CD4-positive, alpha-beta memory T cell (primary cell): ENCODE measurements at regions of chrX and their contacts with region 1.

Region 1: DNA sequence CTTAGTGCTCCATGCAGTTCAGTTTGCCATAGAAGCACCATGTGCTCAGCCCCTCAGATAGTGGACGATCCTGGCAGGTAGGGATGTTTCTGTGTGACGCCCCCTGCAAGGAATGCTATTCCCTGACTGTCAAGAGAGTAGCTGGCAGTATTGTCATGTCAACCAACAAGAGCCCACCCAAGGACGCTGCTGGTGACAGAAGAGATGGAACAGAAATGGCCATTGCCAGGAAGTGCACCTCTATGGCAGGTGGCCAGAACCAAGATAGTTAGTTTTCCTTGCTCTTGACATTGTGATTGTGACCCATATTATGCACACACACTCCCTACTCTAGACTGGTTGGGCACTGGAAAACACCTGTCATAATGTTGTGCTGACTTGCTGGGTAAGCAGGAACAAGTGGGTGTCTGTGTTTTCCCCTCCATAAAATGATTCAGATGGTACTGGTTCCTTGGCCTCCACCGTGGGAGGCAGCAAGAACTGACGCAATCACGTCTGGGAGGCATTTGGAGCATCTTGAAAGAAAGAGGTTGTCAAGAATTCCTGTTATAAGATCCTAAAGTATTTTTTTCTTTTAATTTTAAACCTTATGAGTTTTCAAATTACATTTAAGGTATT is 507.9 kb downstream of the MID1IP1 start:
- DNase-seq: peak; percentile 17 to 82 (median 36)
- H3K4me3 ChIP-seq: no peak overlapping the region
- H3K4me3 Mint-ChIP-seq: peak overlapping the region in 7 of 8 donors; percentile 37 to 86 (median 62)
- H3K27ac ChIP-seq: peak overlapping the region; percentile 69
- H3K27ac Mint-ChIP-seq: peak overlapping the region; percentile 91 to 99 (median 96)
- H3K4me1 ChIP-seq: peaks cover 54% of the 10 kb centered on the region
- H3K4me1 Mint-ChIP-seq: peaks cover 28 to 62% (median 48%) of the 10 kb centered on the region in 4 donors
- H3K27me3 ChIP-seq: no peaks in the 10 kb centered on the region
- H3K27me3 Mint-ChIP-seq: no peaks in the 10 kb centered on the region

Region 2: DNA sequence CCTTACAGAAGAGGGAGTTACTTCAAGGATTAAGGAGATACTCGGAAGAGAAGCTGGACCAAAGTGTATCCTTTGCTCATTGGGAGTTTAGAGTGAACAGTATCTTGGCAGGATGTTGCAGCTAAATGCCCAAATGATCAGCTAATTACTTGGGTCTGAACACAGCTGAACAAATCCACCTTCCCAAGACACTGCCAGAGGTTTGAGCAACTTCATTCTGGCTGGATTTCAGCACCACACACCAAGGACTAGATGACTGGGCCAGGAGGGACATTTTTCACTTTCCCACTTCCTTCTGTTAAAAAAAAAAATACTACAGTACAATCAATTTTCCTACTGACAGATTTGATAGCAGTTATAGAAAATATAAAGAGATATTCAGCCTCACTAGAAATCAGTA is 183.3 kb before region 1 on chrX:
- CTCF ChIA-PET with region 1: no interaction called
- POLR2A ChIA-PET with region 1: no interaction called
- intact Hi-C with region 1: no loop called
- DNase-seq: no peak
- H3K4me3 ChIP-seq: no peak overlapping the region
- H3K4me3 Mint-ChIP-seq: no peak overlapping the region
- H3K27ac ChIP-seq: no peak overlapping the region
- H3K27ac Mint-ChIP-seq: no peak overlapping the region
- H3K4me1 ChIP-seq: no peaks in the 10 kb centered on the region
- H3K4me1 Mint-ChIP-seq: no peaks in the 10 kb centered on the region
- H3K27me3 ChIP-seq: no peaks in the 10 kb centered on the region
- H3K27me3 Mint-ChIP-seq: peaks cover 3 to 6% of the 10 kb centered on the region in 2 donors

Region 3: DNA sequence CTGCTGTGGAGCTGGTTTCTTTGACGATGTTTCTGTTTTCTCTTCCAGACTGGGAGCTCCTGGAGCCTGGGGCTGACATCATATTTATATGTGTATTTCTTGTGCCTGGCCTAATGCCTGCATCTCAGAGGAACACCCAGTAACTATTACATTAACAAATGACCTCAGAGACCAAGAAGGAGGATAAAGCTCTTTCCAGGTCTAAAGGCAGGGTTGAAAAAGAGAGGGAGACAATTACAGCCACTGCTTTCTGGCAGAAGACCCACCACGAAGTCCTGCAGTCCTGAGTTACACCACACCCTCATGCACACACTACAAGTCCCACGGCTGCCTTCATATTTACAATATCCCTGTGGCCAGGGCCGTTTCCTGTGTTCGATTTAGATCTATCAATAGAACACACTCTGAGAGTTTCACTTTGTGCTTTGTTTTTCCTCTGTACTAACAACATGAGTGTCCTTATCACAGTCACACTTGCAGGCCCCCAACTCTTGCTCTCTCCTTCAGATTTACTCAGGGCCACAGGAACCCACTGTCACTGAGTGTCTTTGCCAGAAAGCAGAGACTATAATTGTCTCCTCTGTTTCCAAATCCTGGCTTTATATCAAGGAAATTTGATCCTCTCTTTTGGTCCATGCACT is 27.7 kb after region 1 on chrX:
- CTCF ChIA-PET with region 1: interaction called, 5 read pairs
- POLR2A ChIA-PET with region 1: interaction called, 10 read pairs
- intact Hi-C with region 1: no loop called
- DNase-seq: peak in 3 of 5 donors; percentile 14 to 32 (median 15)
- H3K4me3 ChIP-seq: peak overlapping the region in 1 of 2 donors; percentile 14
- H3K4me3 Mint-ChIP-seq: peak overlapping the region in 7 of 8 donors; percentile 53 to 80 (median 62)
- H3K27ac ChIP-seq: peak overlapping the region; percentile 25
- H3K27ac Mint-ChIP-seq: peak overlapping the region; percentile 60 to 93 (median 86)
- H3K4me1 ChIP-seq: peaks cover 35% of the 10 kb centered on the region
- H3K4me1 Mint-ChIP-seq: peaks cover 24 to 37% (median 31%) of the 10 kb centered on the region in 4 donors
- H3K27me3 ChIP-seq: no peaks in the 10 kb centered on the region
- H3K27me3 Mint-ChIP-seq: no peaks in the 10 kb centered on the region

Region 4: GRCh38 chrX:40040686-40041461 is 731.7 kb after region 1 on chrX:
- CTCF ChIA-PET with region 1: no interaction called
- POLR2A ChIA-PET with region 1: no interaction called
- intact Hi-C with region 1: no loop called
- DNase-seq: no peak
- H3K4me3 ChIP-seq: no peak overlapping the region
- H3K4me3 Mint-ChIP-seq: peak overlapping the region in 6 of 8 donors; percentile 16 to 59 (median 29)
- H3K27ac ChIP-seq: no peak overlapping the region
- H3K27ac Mint-ChIP-seq: peak overlapping the region in 2 of 7 donors; percentile 18 to 32
- H3K4me1 ChIP-seq: peaks cover 19% of the 10 kb centered on the region
- H3K4me1 Mint-ChIP-seq: peaks cover 12 to 22% (median 17%) of the 10 kb centered on the region in 4 donors
- H3K27me3 ChIP-seq: no peaks in the 10 kb centered on the region
- H3K27me3 Mint-ChIP-seq: no peaks in the 10 kb centered on the region